ENCODE measurements at regions of chrX and their contacts with region 1.

Region 1: DNA sequence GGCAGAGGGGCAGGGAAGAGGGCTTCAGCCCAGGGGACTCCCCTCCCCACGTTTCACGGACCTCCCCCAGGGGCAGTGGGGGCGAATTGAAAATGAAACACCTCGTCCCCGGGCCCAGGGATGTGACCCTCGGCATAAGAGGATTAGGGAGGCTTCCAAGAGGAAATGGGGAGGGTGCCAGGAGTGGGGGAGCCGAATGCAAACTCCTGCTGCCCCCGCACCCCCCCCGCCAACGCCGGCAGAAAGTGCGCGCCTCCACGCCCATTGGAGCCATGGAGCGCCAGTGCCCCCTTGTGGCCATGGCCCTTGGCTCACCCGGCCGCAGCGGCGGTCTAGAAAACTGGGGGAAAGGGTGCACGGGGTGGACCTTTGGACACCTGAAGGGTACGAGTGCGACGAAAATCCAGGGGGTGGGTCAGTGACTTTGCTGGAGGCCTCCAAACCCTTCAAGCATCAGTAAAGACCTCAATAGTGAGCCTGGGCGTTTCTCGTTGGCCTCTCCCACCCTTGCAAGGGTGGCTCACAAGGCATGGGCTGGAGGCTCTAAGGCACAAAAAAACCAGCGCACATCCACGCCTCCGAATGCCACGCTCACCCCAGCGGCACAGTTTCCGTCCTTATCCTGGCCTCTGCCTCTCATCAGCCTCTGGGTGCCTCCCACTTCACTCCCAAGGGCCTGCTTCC is 120.8 kb upstream of the PJA1 start:
- DNase-seq: peak; percentile 69
- ATAC-seq: peak; percentile 77 to 86

Region 2: GRCh38 chrX:68822641-68823410 is 463.2 kb before region 1 on chrX:
- intact Hi-C with region 1: loop called (anchors 2 to 10 kb)
- DNase-seq: peak; percentile 56
- ATAC-seq: peak; percentile 89 to 91

Region 3: GRCh38 chrX:69238114-69238886 is 47.7 kb before region 1 on chrX:
- intact Hi-C with region 1: loop called in 1 of 2 experiments (anchors 10 kb)
- DNase-seq: peak; percentile 39
- ATAC-seq: peak; percentile 73 to 83

Measured in left cardiac atrium (tissue), 4 donors.